ENCODE measurements at regions of chr7 and their contacts with region 1.

Region 1: DNA sequence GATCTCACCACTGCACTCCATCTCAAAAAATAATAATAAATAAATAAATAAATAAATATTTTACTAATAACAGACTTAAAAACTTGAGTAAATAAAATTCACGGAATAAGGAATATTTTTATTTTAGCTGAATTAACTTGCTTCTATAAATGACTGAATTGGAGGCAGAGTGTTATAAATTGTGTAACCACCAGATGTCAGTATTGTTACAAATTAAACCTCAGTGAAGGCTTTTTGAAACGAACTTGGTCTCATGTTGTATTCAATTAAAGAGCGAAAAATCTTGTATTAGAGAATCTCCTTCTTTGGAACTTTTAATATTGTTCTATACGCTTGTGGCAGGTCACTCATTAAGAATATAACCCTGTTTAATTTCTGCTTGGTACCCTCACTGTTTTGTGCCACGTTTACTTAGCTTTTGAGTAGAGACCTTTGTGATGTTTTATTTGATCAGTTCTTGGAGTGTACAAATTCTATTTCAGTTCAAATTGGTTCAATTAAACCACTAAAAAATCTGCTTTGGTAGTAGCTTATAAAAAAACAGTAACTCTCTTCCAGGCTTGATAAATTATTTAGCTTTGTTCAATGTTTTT is 45.6 kb upstream of the SCIN start:
- DNase-seq: no peak

Region 2: DNA sequence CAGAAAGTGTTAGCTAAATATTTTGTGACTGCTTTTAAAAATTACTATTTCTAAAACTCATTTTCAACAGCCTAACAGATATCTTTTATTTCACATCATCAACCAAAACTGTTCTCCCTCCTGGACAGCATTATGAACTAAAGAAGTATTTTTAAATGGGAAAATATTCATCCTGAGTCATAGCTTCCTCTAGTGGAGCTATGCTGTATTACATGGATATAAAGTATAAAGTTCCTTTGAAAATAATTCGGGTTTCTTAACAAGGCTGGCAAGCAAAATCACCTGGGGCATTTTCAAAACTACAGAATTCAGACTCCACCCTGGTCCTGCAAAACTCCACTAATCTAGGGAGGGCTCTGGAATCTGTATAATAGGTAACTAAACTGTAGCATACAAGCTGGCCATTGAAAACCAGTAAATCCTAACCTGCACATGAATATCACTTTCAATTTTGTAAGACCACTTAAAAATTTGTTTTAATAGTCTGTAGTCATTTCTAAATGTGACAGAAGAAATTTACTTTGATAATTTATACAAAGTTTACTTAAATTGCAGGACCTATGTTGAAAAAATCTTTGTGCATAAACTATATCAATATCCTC is 99.1 kb after region 1 on chr7:
- intact Hi-C with region 1: loop called (anchors 1 kb)
- DNase-seq: no peak

Region 3: GRCh38 chr7:13262929-13263530 is 738.1 kb after region 1 on chr7:
- intact Hi-C with region 1: loop called (anchors 5 kb)
- DNase-seq: no peak